ENCODE measurements at regions of chr18 and their contacts with region 1.

Region 1: GRCh38 chr18:63936156-63936931 is 12.8 kb upstream of the HMSD start:
- DNase-seq: peak; percentile 76
- ATAC-seq: peak; percentile 94
- H3K4me3 Mint-ChIP-seq: peak overlapping the region; percentile 43
- H3K27ac Mint-ChIP-seq: peak overlapping the region; percentile 28
- H3K4me1 Mint-ChIP-seq: peaks cover 2% of the 10 kb centered on the region
- H3K27me3 Mint-ChIP-seq: peaks cover 12% of the 10 kb centered on the region

Region 2: GRCh38 chr18:63823518-63824219 is 112.7 kb before region 1 on chr18:
- CTCF ChIA-PET with region 1: interaction called, 4 read pairs
- POLR2A ChIA-PET with region 1: no interaction called
- intact Hi-C with region 1: loop called (anchors 1 kb)
- DNase-seq: peak; percentile 69
- ATAC-seq: no peak
- H3K4me3 Mint-ChIP-seq: no peak overlapping the region
- H3K27ac Mint-ChIP-seq: no peak overlapping the region
- H3K4me1 Mint-ChIP-seq: no peaks in the 10 kb centered on the region
- H3K27me3 Mint-ChIP-seq: peaks cover 7% of the 10 kb centered on the region

Region 3: GRCh38 chr18:63922049-63922448 is 14.3 kb before region 1 on chr18:
- CTCF ChIA-PET with region 1: interaction called, 10 read pairs
- POLR2A ChIA-PET with region 1: interaction called, 4 read pairs
- intact Hi-C with region 1: no loop called
- DNase-seq: no peak
- ATAC-seq: no peak
- H3K4me3 Mint-ChIP-seq: no peak overlapping the region
- H3K27ac Mint-ChIP-seq: no peak overlapping the region
- H3K4me1 Mint-ChIP-seq: no peaks in the 10 kb centered on the region
- H3K27me3 Mint-ChIP-seq: peaks cover 39% of the 10 kb centered on the region

Region 4: DNA sequence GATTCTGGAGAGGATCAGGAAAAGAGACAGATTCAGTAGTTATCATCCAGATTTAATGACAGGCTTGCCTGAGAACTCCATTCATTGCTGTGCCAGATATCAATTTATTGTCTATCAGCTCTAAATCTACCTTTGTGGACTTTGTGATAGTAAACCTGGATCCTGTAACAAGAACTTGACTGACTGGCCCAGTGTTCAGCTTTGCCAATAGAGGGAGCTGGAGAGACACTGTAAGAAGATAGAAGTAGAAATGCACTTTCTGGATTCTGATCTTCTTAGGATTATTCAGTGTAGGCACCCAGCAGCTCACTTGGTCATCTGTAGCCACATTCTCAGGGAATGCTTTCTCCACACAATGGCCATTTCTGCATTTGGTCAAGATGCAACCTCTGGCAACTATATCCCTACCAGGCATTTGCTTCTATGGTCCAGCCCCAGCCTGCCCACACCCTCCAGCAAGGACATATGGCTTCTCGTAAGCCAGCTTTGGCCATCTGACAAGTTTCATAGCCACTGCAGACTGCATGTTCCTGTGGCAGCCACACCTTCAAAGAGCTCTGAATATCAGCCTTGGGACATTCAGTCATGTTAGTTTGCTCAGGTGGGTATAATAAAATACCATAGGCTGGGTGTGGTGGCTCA is 27.4 kb after region 1 on chr18:
- CTCF ChIA-PET with region 1: interaction called, 10 read pairs
- POLR2A ChIA-PET with region 1: no interaction called
- intact Hi-C with region 1: no loop called
- DNase-seq: peak; percentile 65
- ATAC-seq: peak; percentile 81
- H3K4me3 Mint-ChIP-seq: no peak overlapping the region
- H3K27ac Mint-ChIP-seq: no peak overlapping the region
- H3K4me1 Mint-ChIP-seq: peaks cover 7% of the 10 kb centered on the region
- H3K27me3 Mint-ChIP-seq: peaks cover 16% of the 10 kb centered on the region

Region 5: DNA sequence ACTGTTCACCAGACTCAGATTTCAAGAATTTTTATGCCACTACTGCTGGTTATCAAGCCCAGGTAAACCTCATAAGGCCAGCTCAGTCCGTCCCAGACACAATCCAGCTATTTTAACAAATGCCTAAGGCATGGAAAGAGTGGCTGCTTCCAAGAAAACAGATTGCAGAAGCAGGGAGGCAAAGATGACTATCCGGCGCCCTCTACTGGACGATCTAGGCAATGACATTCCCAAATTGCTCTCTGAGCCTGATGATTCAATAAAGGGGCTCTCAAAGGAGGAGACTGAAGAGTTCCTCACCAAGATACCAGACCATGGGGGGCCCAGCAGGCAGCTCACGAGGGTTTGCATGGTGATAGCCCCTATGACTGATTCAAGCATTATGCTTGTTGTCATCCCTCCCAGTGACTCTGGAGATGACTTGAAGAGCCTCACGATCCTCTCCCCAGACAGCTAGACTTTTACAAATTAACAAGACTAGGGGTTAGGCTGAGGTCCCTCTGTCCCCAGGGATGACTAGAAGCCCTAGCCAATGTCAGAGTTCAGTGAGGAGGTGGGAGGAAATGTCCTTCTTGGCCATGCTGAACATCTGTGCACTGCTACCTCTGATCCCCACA is 58.5 kb after region 1 on chr18:
- CTCF ChIA-PET with region 1: no interaction called
- POLR2A ChIA-PET with region 1: no interaction called
- intact Hi-C with region 1: no loop called
- DNase-seq: peak; percentile 56
- ATAC-seq: peak; percentile 23
- H3K4me3 Mint-ChIP-seq: no peak overlapping the region
- H3K27ac Mint-ChIP-seq: no peak overlapping the region
- H3K4me1 Mint-ChIP-seq: peaks cover 5% of the 10 kb centered on the region
- H3K27me3 Mint-ChIP-seq: no peaks in the 10 kb centered on the region

Region 6: DNA sequence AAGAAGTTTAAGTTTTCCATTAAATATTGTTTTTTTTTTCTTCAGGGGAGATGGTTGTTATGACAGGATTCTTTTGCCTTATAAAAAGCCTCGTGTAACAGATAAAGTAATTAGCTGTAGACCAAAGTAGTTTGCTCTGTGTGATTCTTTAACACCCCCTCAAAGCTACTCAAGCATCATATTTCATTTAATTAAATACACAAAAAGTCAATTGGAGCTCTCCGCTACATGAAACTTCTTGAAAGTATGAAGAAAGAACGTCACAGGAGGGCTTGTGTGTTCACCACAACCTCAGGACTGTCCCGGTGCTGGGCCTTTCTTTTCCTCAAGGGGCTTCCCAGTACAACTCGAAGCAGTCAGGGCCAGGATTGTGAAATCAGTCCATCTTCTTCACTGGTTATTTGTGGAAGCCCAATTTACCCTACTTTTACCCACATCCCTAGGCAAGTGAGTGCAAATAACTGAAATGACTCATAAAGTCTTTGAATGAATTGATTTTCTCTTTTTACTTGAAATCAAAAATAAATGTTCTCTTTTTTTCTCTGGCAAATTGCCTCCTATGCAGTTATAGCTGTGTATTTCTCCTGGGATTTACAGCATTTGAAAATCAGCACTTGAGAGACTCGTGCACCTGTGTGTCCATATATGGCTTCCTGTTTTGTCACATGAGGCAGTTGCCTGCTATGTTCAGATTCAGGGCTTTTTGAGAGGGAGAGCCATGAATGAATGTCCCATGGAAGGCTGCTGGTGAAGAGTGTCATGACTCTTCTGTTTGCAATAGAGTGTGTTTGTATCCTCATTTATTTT is 164.0 kb after region 1 on chr18:
- CTCF ChIA-PET with region 1: no interaction called
- POLR2A ChIA-PET with region 1: no interaction called
- intact Hi-C with region 1: no loop called
- DNase-seq: no peak
- ATAC-seq: no peak
- H3K4me3 Mint-ChIP-seq: no peak overlapping the region
- H3K27ac Mint-ChIP-seq: no peak overlapping the region
- H3K4me1 Mint-ChIP-seq: no peaks in the 10 kb centered on the region
- H3K27me3 Mint-ChIP-seq: no peaks in the 10 kb centered on the region

Measured in activated CD4-positive, alpha-beta T cell treated with anti-CD3 and anti-CD28 coated beads for 36 hours (primary cell).